T-cell (primary cell): ENCODE measurements at regions of chr1 and their contacts with region 1.

Region 1: GRCh38 chr1:245258271-245258920 is 103.6 kb downstream of the KIF26B start:
- DNase-seq: no peak
- ATAC-seq: no peak
- H3K4me3 ChIP-seq: no peak overlapping the region
- H3K4me3 Mint-ChIP-seq: no peak overlapping the region
- H3K27ac ChIP-seq: no peak overlapping the region
- H3K27ac Mint-ChIP-seq: no peak overlapping the region
- H3K4me1 ChIP-seq: no peaks in the 10 kb centered on the region
- H3K4me1 Mint-ChIP-seq: no peaks in the 10 kb centered on the region
- H3K27me3 ChIP-seq: peaks cover 0 to 6% of the 10 kb centered on the region in 2 experiments
- H3K27me3 Mint-ChIP-seq: peaks cover 0 to 11% of the 10 kb centered on the region in 2 donors

Region 2: GRCh38 chr1:245566952-245567351 is 308.6 kb after region 1 on chr1:
- CTCF ChIA-PET with region 1: interaction called in 1 of 2 experiments, 13 read pairs
- POLR2A ChIA-PET with region 1: no interaction called
- DNase-seq: no peak
- ATAC-seq: no peak
- H3K4me3 ChIP-seq: no peak overlapping the region
- H3K4me3 Mint-ChIP-seq: no peak overlapping the region
- H3K27ac ChIP-seq: no peak overlapping the region
- H3K27ac Mint-ChIP-seq: no peak overlapping the region
- H3K4me1 ChIP-seq: no peaks in the 10 kb centered on the region
- H3K4me1 Mint-ChIP-seq: no peaks in the 10 kb centered on the region
- H3K27me3 ChIP-seq: peaks cover 0 to 6% of the 10 kb centered on the region in 2 experiments
- H3K27me3 Mint-ChIP-seq: no peaks in the 10 kb centered on the region